ENCODE measurements at regions of chr20 and their contacts with region 1.

Region 1: GRCh38 chr20:48657475-48658470 is 170.0 kb downstream of the PREX1 start:
- DNase-seq: no peak
- H3K4me3 ChIP-seq: no peak overlapping the region
- H3K27me3 ChIP-seq: no peaks in the 10 kb centered on the region
- CTCF ChIP-seq: peak; percentile 92

Region 2: GRCh38 chr20:48668451-48668952 is 10.7 kb after region 1 on chr20:
- CTCF ChIA-PET with region 1: interaction called, 22 read pairs
- POLR2A ChIA-PET with region 1: no interaction called
- DNase-seq: no peak
- H3K4me3 ChIP-seq: no peak overlapping the region
- H3K27me3 ChIP-seq: no peaks in the 10 kb centered on the region
- CTCF ChIP-seq: no peak

Region 3: DNA sequence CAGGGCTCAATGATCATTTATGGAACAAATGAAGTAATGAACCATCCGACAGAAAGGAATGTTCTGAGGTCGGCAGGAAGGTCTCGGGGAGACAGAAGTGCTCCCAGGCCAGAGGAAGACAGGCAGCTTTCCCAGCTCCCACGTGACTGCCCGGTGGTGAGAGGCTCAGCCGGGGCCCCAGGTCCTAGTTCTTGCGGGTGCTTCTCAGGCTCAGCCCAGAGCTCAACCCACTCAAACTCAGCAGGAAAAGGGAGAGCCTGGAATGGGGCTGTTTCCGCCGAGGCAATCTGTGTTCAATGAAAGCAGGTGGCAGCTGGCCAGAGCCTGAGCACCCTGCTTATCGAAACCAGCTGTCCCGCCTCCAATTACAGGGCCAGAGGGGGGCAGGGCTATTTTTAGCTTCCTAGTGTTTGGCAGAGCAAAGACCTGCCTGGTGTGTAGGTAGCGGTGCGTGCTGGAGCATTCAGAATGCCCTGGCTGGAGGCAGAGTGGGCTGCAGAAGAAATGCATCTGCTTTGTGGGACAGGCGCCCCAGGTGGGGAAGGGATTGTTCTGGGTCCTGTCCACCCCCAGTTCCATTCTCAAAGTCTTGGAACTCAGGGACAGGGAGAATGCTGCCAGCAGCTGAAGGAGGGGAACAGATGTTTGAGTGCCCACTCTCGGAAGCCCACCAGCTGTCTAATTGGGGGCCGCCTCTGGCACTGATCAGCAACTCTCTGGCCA is 24.9 kb after region 1 on chr20:
- CTCF ChIA-PET with region 1: interaction called, 16 read pairs
- POLR2A ChIA-PET with region 1: no interaction called
- DNase-seq: peak; percentile 87
- H3K4me3 ChIP-seq: no peak overlapping the region
- H3K27me3 ChIP-seq: no peaks in the 10 kb centered on the region
- CTCF ChIP-seq: no peak

Region 4: DNA sequence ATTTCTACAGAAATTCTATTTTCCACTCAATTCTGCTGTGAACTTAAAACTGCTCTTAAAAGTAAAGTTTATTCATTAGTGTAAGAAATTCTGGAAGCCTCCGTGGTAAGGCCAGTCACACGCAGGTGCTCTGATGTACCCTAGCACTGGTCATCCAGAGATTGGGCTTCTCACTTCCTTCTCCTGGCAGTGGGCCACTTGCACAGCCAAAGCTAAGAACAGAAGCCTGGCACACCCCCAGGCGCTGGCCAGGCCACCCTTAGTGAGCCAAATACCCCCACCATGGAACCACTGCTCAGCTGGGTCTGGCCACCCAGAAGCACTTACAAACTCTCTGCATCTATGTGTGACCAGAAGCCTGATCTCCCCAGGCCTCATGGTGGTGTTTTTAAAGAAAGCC is 228.4 kb after region 1 on chr20:
- CTCF ChIA-PET with region 1: interaction called, 13 read pairs
- POLR2A ChIA-PET with region 1: no interaction called
- DNase-seq: no peak
- H3K4me3 ChIP-seq: no peak overlapping the region
- H3K27me3 ChIP-seq: 0 out of 2 replicates have a peak, but pooled peaks cover 2% of the 10 kb centered on the region
- CTCF ChIP-seq: no peak

Region 5: GRCh38 chr20:48897246-48897994 is 239.6 kb after region 1 on chr20:
- CTCF ChIA-PET with region 1: interaction called, 27 read pairs
- POLR2A ChIA-PET with region 1: no interaction called
- DNase-seq: peak; percentile 68
- H3K4me3 ChIP-seq: no peak overlapping the region
- H3K27me3 ChIP-seq: peaks cover 10% of the 10 kb centered on the region
- CTCF ChIP-seq: no peak

Region 6: DNA sequence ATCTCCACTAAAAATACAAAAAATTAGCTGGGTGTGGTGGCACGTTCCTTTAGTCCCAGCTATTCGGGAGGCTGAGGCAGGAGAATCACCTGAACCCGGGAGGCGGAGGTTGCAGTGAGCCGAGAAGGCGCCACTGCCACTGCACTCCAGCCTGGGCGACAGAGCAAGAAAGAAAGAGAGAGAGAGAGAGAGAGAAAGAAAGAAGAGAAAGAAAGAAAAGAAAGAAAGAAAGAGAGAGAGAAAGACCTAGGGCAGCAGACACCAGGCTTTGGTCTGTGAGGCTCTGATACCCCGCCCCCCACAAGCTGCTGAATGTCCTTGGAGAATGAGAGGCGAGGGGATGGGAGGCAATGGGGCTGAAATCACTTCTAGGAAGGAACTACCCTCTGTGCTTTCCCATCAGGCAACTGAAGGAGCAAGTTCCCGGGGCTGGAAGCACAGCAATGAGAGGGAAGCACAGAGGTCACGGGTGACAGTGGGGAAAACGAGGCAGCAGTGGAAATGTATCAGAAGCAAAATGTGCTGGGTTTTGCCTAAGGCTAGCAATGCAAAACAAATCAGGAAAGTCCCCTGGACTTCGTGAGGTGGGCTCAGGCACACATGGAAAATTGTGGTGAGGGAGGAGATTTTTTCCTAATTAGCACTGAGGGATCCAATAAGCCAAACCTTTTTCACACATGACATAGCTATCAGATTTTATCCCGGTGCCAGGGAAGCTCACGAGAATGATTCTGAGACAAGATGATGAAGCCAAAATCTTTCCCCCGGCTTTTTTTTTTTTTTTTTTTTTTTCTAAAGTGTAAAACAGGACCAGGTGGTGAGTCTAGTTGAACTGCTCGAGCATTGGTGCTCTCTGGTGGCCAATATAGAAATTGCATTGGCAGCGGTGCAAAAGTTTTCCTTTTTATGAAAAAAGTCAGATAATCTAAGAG is 246.9 kb after region 1 on chr20:
- CTCF ChIA-PET with region 1: interaction called, 240 read pairs
- POLR2A ChIA-PET with region 1: no interaction called
- DNase-seq: peak; percentile 20
- H3K4me3 ChIP-seq: no peak overlapping the region
- H3K27me3 ChIP-seq: peaks cover 3% of the 10 kb centered on the region
- CTCF ChIP-seq: peak; percentile 71

Region 7: DNA sequence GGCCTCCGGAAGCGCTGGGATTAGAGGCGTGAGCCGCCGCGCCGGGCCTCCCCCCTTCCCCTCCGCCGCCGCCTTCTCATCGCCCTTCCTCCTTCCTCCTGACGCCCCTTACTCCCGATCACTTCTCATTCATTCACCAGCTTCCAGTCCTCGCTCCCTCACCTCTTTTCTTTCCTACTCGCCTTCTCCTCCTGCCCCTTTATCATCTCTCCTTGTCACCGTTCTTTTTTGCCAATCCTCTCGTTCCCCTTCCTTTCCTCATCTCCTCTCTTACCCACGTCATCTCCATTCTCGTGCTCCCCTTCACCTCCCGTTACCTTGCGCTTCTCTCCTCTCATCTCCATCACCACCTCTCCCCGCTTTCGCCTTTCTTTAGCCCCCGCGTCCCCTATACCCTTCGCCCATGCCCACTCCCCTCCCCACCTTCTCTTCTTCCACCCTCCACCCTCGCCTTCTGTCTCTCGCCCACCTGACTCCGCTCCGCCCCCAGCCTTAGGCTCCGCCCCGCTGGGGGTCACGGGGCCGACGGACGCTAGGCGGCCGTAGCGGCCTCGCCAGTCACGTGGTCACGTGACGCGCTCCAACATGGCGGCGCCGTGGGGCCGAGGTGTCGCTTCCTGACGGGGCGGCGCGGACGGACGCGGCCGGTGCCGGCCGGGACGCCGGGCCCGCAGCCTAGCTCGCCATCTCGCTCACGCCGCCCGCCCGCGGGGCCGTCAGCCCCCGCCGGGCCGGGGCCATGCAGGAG is 263.6 kb after region 1 on chr20 and contains the start of gene ARFGEF2:
- CTCF ChIA-PET with region 1: interaction called, 10 read pairs
- POLR2A ChIA-PET with region 1: no interaction called
- DNase-seq: no peak
- H3K4me3 ChIP-seq: peak within 1 kb of the TSS; percentile 66
- H3K27me3 ChIP-seq: 0 out of 2 replicates have a peak, but pooled peaks cover 2% of the 10 kb centered on the region
- CTCF ChIP-seq: peak; percentile 10; the same call in 1 of the 2 replicates
- polyA plus RNA-seq, gene ARFGEF2: 15.5 and 20.0 TPM in 2 replicates

Measured in BJ (cell line).